IMR-90 (cell line): ENCODE measurements at regions of chr10 and their contacts with region 1.

Region 1: GRCh38 chr10:102641880-102642735 is 2.2 kb upstream of the TRIM8 start:
- DNase-seq: peak; percentile 97
- ATAC-seq: peak; percentile 71
- H3K4me3 ChIP-seq: peak overlapping the region; percentile 77
- H3K27ac ChIP-seq: peak overlapping the region; percentile 95
- H3K4me1 ChIP-seq: peaks cover 2% of the 10 kb centered on the region; the same call in 1 of the 2 replicates
- H3K27me3 ChIP-seq: no peaks in the 10 kb centered on the region
- CTCF ChIP-seq: 0 out of 2 replicates have a peak, but pooled peaks have one; percentile 0
- POLR2A ChIP-seq: peak; percentile 62; the same call in 1 of the 2 replicates
- RAD21 ChIP-seq: no peak

Region 2: DNA sequence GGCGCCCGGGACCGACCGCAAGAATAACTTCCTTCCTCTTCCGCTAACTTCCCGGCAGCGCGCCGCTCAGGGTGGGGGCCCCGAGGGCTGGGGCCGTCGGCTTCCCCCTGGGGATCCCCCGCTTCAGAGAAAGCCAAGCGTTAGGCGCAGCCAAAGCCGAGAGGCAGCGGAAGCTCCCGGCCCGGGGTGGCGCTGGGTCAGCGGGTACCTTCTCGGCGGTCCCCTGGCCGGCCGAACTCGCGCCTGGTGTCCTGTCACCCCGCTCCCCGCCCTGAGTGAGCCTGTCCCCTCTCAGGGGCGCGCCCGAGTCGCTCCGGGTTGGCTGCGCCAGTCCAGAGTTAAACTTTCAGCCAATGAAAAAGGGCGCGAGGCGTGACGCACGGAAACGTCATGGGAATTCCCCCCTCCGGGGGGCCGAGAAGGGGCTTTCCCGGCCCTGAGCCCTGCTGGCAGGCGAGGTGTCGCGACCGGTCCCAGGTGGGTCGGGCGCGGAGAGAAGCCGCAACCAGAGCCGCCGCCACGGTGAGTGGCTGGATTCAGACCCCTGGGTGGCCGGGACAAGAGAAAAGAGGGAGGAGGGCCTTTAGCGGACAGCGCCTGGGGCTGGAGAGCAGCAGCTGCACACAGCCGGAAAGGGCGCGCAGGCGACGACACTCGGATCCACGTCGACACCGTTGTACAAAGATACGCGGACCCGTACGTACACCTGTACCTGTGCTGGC is 247.9 kb before region 1 on chr10:
- CTCF ChIA-PET with region 1: no interaction called
- POLR2A ChIA-PET with region 1: no interaction called
- dilution Hi-C with region 1: no loop called
- in situ Hi-C with region 1: no loop called
- intact Hi-C with region 1: loop called (anchors 10 kb)
- DNase-seq: peak; percentile 95
- ATAC-seq: peak; percentile 89
- H3K4me3 ChIP-seq: peak overlapping the region; percentile 51
- H3K27ac ChIP-seq: peak overlapping the region; percentile 55
- H3K4me1 ChIP-seq: peaks cover 7% of the 10 kb centered on the region
- H3K27me3 ChIP-seq: no peaks in the 10 kb centered on the region
- CTCF ChIP-seq: no peak; the same call in 1 of the 2 replicates
- POLR2A ChIP-seq: peak; percentile 93
- RAD21 ChIP-seq: no peak

Region 3: DNA sequence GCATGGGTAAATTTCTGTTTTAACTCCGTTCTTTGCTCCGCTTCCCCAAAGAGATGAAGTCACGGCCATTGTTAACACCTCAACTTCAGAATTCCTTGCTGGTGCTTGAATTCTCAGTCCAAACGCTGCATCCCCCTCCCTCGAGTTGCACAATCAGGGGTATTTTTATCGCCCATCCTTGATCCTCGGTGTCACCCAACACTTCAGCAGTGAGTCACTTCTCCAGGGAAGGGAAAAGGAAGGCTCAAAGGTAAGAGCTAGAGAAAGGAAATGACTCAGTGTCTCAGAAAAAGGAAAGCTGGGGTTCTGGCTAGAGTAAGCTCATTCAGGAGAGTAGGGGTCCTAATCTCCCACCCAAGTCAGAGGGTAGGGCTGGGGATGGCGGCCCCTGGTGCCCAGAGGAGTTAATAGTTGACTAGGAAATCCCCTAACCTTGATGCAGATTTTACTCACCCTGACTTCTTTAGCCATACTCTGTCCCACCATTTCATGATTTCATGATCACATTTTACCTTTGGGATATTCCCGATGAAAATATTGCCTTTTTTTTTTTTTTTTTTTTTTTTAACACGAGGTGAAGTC is 37.6 kb before region 1 on chr10:
- CTCF ChIA-PET with region 1: no interaction called
- POLR2A ChIA-PET with region 1: interaction called, 3 read pairs
- dilution Hi-C with region 1: no loop called
- in situ Hi-C with region 1: no loop called
- intact Hi-C with region 1: loop called (anchors 1 kb)
- DNase-seq: peak; percentile 92
- ATAC-seq: peak; percentile 55
- H3K4me3 ChIP-seq: no peak overlapping the region
- H3K27ac ChIP-seq: peak overlapping the region; percentile 86
- H3K4me1 ChIP-seq: peaks cover 42% of the 10 kb centered on the region
- H3K27me3 ChIP-seq: no peaks in the 10 kb centered on the region
- CTCF ChIP-seq: no peak
- POLR2A ChIP-seq: no peak
- RAD21 ChIP-seq: no peak

Region 4: GRCh38 chr10:102656026-102656425 is 13.9 kb after region 1 on chr10:
- CTCF ChIA-PET with region 1: no interaction called
- POLR2A ChIA-PET with region 1: interaction called, 12 read pairs
- dilution Hi-C with region 1: no loop called
- in situ Hi-C with region 1: no loop called
- intact Hi-C with region 1: no loop called
- DNase-seq: no peak
- ATAC-seq: no peak
- H3K4me3 ChIP-seq: no peak overlapping the region
- H3K27ac ChIP-seq: no peak overlapping the region
- H3K4me1 ChIP-seq: peaks cover 14% of the 10 kb centered on the region
- H3K27me3 ChIP-seq: no peaks in the 10 kb centered on the region
- CTCF ChIP-seq: no peak
- POLR2A ChIP-seq: no peak
- RAD21 ChIP-seq: no peak

Region 5: GRCh38 chr10:102713814-102714620 is 71.9 kb after region 1 on chr10 and contains the start of gene ARL3:
- CTCF ChIA-PET with region 1: no interaction called
- POLR2A ChIA-PET with region 1: no interaction called
- dilution Hi-C with region 1: no loop called
- in situ Hi-C with region 1: no loop called
- intact Hi-C with region 1: loop called (anchors 1 kb)
- DNase-seq: peak; percentile 98
- ATAC-seq: peak; percentile 89
- H3K4me3 ChIP-seq: peak within 1 kb of the TSS; percentile 81
- H3K27ac ChIP-seq: peak within 1 kb of the TSS; percentile 86
- H3K4me1 ChIP-seq: peaks cover 9% of the 10 kb centered on the region
- H3K27me3 ChIP-seq: no peaks in the 10 kb centered on the region
- CTCF ChIP-seq: peak; percentile 41; the same call in 1 of the 2 replicates
- POLR2A ChIP-seq: peak; percentile 43; the same call in 1 of the 2 replicates
- RAD21 ChIP-seq: 0 out of 2 replicates have a peak, but pooled peaks have one; percentile 34
- total RNA-seq, gene ARL3: 5.0 and 11.7 TPM in 2 replicates

Region 6: DNA sequence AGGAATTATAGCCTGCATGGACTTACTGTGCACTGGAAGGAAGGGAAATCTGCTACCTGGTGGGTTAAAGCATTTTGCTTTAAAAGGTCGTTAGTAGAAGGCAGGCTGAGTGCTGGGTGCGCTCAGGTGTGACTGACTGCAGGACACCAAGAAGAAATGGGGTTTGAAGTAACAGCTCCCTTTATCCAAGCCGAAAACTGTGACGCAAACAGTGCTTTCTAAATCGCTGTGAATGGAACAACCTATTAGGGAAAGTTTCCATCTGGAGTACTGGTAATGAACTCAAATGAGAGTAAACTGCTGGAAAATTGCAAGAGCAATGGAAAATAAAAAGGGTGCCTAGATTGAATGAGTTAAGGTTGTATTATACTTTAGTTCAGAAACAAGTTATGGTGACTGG is 371.3 kb after region 1 on chr10:
- CTCF ChIA-PET with region 1: no interaction called
- POLR2A ChIA-PET with region 1: no interaction called
- dilution Hi-C with region 1: no loop called
- in situ Hi-C with region 1: no loop called
- intact Hi-C with region 1: no loop called
- DNase-seq: no peak
- ATAC-seq: no peak
- H3K4me3 ChIP-seq: no peak overlapping the region
- H3K27ac ChIP-seq: no peak overlapping the region
- H3K4me1 ChIP-seq: peaks cover 4% of the 10 kb centered on the region
- H3K27me3 ChIP-seq: no peaks in the 10 kb centered on the region
- CTCF ChIP-seq: no peak
- POLR2A ChIP-seq: no peak
- RAD21 ChIP-seq: no peak

Region 7: DNA sequence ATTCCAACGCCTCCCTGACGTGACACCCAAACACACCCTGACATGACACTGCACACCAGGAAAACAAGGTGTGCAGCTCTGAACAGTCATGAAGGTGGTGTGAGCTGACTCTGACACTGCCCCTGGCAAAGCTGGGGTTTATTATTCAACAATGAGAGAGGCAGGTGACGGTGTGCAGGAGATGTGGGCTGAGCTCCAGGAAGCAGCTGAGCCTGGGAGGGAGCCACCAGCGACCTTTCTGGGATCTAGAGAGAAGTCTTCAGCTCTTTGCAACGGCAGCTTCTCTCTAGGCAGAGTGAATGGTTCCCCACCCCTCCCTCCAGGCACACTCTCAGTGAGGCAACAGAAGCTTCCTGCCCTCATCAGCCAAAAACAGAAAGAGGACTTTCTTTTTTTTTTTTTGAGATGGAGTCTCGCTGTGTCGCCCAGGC is 1147.7 kb after region 1 on chr10:
- CTCF ChIA-PET with region 1: no interaction called
- POLR2A ChIA-PET with region 1: no interaction called
- dilution Hi-C with region 1: no loop called
- in situ Hi-C with region 1: no loop called
- intact Hi-C with region 1: no loop called
- DNase-seq: no peak
- ATAC-seq: no peak
- H3K4me3 ChIP-seq: no peak overlapping the region
- H3K27ac ChIP-seq: no peak overlapping the region
- H3K4me1 ChIP-seq: peaks cover 2% of the 10 kb centered on the region
- H3K27me3 ChIP-seq: no peaks in the 10 kb centered on the region
- CTCF ChIP-seq: no peak
- POLR2A ChIP-seq: no peak
- RAD21 ChIP-seq: no peak